ENCODE measurements at regions of chr4 and their contacts with region 1.

Region 1: GRCh38 chr4:186137196-186137794 is 32.8 kb downstream of the FAM149A start:
- DNase-seq: no peak
- H3K4me3 ChIP-seq: peak overlapping the region; percentile 17
- H3K27ac ChIP-seq: no peak overlapping the region
- H3K4me1 ChIP-seq: no peaks in the 10 kb centered on the region
- H3K27me3 ChIP-seq: no peaks in the 10 kb centered on the region
- CTCF ChIP-seq: peak; percentile 47 to 51 (median 50)
- EP300 ChIP-seq: no peak
- POLR2A ChIP-seq: no peak

Region 2: GRCh38 chr4:185412412-185412811 is 724.9 kb before region 1 on chr4:
- intact Hi-C with region 1: no loop called
- DNase-seq: no peak
- H3K4me3 ChIP-seq: no peak overlapping the region
- H3K27ac ChIP-seq: no peak overlapping the region
- H3K4me1 ChIP-seq: no peaks in the 10 kb centered on the region
- H3K27me3 ChIP-seq: no peaks in the 10 kb centered on the region
- CTCF ChIP-seq: no peak
- EP300 ChIP-seq: no peak
- POLR2A ChIP-seq: no peak

Region 3: GRCh38 chr4:186067757-186068385 is 69.4 kb before region 1 on chr4:
- intact Hi-C with region 1: loop called in 1 of 4 experiments (anchors 10 kb)
- DNase-seq: peak; percentile 37 to 64 (median 44)
- H3K4me3 ChIP-seq: peak overlapping the region; percentile 59
- H3K27ac ChIP-seq: peak overlapping the region in 1 of 2 donors; percentile 67
- H3K4me1 ChIP-seq: peaks cover 3% of the 10 kb centered on the region
- H3K27me3 ChIP-seq: no peaks in the 10 kb centered on the region
- CTCF ChIP-seq: peak in 2 of 3 donors; percentile 13 to 30
- EP300 ChIP-seq: no peak
- POLR2A ChIP-seq: no peak